ENCODE measurements at regions of chr6 and their contacts with region 1.

Region 1: DNA sequence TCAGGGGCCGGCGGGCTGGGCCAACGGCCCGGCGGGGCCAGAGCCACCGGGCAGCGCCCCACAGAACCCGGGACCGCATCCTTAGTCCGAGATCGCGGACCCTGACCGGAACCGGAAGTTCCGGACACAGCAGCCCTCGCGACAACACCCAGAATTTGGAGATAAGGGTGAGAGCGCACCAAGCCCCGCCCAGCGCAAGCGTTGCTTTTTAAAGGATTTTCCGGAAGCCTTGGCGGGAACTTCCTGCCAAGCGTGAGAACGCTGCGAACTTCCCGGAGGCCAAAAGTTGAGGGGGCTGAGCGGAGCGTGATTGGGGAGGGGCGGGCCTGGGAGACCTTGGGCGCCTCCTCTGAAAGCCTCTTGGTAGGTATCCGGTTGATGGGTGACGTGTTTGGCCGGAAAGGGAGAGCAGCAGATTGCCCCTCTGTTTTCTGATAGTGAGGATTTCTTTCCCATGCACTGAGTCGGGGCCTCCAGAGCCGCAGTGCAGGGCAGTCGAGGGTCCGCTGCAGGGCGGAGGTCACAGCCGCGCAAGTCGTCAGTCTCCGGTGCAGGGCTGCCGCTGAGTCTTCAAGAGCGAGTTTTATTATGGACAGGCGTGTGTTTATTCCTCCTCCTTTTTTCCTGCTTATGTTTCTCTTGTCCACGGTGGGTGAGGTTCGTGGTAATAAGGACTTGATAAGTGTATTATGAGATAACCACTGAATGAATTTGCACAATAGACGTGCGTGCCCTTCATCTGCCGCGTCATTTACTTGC is at the start of gene MTRF1L:
- DNase-seq: peak; percentile 96
- total RNA-seq, gene MTRF1L: 23.8 TPM

Region 2: DNA sequence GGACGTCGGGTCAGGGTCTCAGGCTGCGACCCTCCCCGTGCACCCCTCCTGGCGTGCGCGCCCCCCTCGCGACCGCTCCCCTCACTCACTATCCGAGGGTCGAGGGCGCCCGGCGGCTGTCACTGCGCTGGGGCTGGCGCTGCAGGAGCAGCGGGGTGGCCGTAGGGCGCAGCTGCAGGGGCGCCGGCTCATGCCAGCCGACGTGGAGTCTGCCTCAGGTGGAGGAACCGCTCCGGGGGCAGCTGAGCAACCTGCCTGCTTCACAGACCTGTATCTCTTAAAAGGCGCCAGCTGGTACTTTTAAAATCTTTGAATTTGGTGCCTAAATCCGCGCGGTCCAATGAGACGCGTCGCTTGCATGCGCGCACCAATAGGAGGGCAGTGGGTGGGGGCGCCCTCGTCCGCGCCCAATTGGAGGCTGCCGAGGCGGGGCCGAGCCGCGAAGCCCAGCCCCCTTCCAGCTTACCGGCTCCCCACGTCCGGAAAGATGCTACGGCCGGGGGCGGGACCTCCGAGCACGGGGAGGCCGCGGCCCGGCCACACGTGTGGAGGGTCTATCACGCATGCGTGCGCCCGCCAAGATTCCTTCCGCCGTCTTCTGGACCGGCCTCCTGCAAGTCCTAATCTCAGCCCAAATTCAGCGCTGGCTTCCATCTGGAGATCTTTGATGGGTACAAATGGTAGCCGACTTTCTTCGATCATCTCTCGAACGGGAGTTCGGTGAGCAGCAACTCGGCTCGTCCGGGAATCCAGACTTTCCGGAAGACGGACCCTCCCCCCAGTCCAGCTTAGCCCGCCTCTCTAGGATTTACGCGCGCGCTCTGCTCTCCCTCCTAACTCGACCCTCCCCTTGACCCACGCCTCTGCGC is 19.8 kb before region 1 on chr6 and contains the start of gene FBXO5:
- intact Hi-C with region 1: loop called (anchors 2 kb)
- DNase-seq: peak; percentile 99
- total RNA-seq, gene FBXO5: 2.1 TPM

Measured in cardiac septum (tissue), 1 donor.